H1 (cell line): ENCODE measurements at regions of chr9 and their contacts with region 1.

Region 1: GRCh38 chr9:87950765-87951488 is 23.4 kb downstream of the CDK20 start:
- DNase-seq: peak in 1 of 2 experiments; percentile 57
- H3K4me3 ChIP-seq: no peak overlapping the region
- H3K27ac ChIP-seq: no peak overlapping the region
- H3K4me1 ChIP-seq: no peaks in the 10 kb centered on the region
- H3K27me3 ChIP-seq: no peaks in the 10 kb centered on the region; a peak in 1 of 7 replicates
- CTCF ChIP-seq: peak in 2 of 3 experiments; percentile 73 to 75; a peak in 3 of 4 replicates
- EP300 ChIP-seq: no peak
- POLR2A ChIP-seq: no peak
- RAD21 ChIP-seq: peak; percentile 95 to 97

Region 2: GRCh38 chr9:87701931-87702421 is 249.0 kb before region 1 on chr9:
- CTCF ChIA-PET with region 1: no interaction called
- POLR2A ChIA-PET with region 1: no interaction called
- DNase-seq: no peak
- H3K4me3 ChIP-seq: no peak overlapping the region
- H3K27ac ChIP-seq: no peak overlapping the region
- H3K4me1 ChIP-seq: 0 out of 7 replicates have a peak, but pooled peaks cover 0 to 4% (median 0%) of the 10 kb centered on the region in 4 experiments
- H3K27me3 ChIP-seq: no peaks in the 10 kb centered on the region
- CTCF ChIP-seq: no peak
- EP300 ChIP-seq: no peak
- POLR2A ChIP-seq: no peak
- RAD21 ChIP-seq: no peak

Region 3: GRCh38 chr9:87883990-87884389 is 66.9 kb before region 1 on chr9:
- CTCF ChIA-PET with region 1: interaction called, 10 read pairs
- POLR2A ChIA-PET with region 1: no interaction called
- DNase-seq: peak in 1 of 2 experiments; percentile 81
- H3K4me3 ChIP-seq: no peak overlapping the region
- H3K27ac ChIP-seq: no peak overlapping the region
- H3K4me1 ChIP-seq: peaks cover 0 to 12% (median 1%) of the 10 kb centered on the region in 4 experiments; a peak in 5 of 7 replicates
- H3K27me3 ChIP-seq: no peaks in the 10 kb centered on the region; a peak in 1 of 7 replicates
- CTCF ChIP-seq: peak; percentile 58 to 76 (median 63)
- EP300 ChIP-seq: no peak
- POLR2A ChIP-seq: no peak
- RAD21 ChIP-seq: peak; percentile 31 to 62; a peak in 3 of 4 replicates

Region 4: GRCh38 chr9:88011005-88011766 is 60.3 kb after region 1 on chr9:
- CTCF ChIA-PET with region 1: interaction called, 19 read pairs
- POLR2A ChIA-PET with region 1: no interaction called
- DNase-seq: no peak
- H3K4me3 ChIP-seq: no peak overlapping the region
- H3K27ac ChIP-seq: no peak overlapping the region
- H3K4me1 ChIP-seq: peaks cover 0 to 2% (median 0%) of the 10 kb centered on the region in 4 experiments; a peak in 1 of 7 replicates
- H3K27me3 ChIP-seq: no peaks in the 10 kb centered on the region
- CTCF ChIP-seq: peak in 2 of 3 experiments; percentile 31 to 34; a peak in 2 of 4 replicates
- EP300 ChIP-seq: no peak
- POLR2A ChIP-seq: no peak
- RAD21 ChIP-seq: peak in 1 of 2 experiments; percentile 38; a peak in 2 of 4 replicates

Region 5: DNA sequence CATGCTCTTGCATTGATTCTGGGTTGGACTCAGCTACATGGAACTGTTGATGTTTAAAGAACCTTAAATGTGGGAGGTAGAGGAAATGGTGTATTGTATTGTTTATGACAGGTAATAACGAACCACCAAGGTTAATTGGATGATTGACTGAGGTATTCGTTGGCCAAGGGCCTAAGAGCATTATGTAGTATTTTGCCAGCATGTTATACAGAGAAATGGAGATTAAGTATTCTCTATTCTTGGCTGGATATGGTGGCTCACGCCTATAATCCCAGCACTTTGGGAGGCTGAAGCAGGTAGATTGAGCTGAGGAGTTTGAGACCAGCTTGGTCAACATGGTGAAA is 82.4 kb after region 1 on chr9:
- CTCF ChIA-PET with region 1: interaction called, 78 read pairs
- POLR2A ChIA-PET with region 1: no interaction called
- DNase-seq: no peak
- H3K4me3 ChIP-seq: no peak overlapping the region
- H3K27ac ChIP-seq: no peak overlapping the region
- H3K4me1 ChIP-seq: peaks cover 0 to 3% (median 0%) of the 10 kb centered on the region in 4 experiments; a peak in 1 of 7 replicates
- H3K27me3 ChIP-seq: no peaks in the 10 kb centered on the region
- CTCF ChIP-seq: no peak
- EP300 ChIP-seq: no peak
- POLR2A ChIP-seq: no peak
- RAD21 ChIP-seq: no peak

Region 6: GRCh38 chr9:88041447-88041846 is 90.5 kb after region 1 on chr9:
- CTCF ChIA-PET with region 1: interaction called, 78 read pairs
- POLR2A ChIA-PET with region 1: no interaction called
- DNase-seq: no peak
- H3K4me3 ChIP-seq: no peak overlapping the region
- H3K27ac ChIP-seq: no peak overlapping the region
- H3K4me1 ChIP-seq: peaks cover 0 to 15% (median 8%) of the 10 kb centered on the region in 4 experiments; a peak in 4 of 7 replicates
- H3K27me3 ChIP-seq: no peaks in the 10 kb centered on the region
- CTCF ChIP-seq: peak in 2 of 3 experiments; percentile 60 to 79; a peak in 3 of 4 replicates
- EP300 ChIP-seq: no peak
- POLR2A ChIP-seq: no peak
- RAD21 ChIP-seq: peak; percentile 86 to 93

Region 7: GRCh38 chr9:88053856-88054501 is 103.1 kb after region 1 on chr9:
- CTCF ChIA-PET with region 1: interaction called, 15 read pairs
- POLR2A ChIA-PET with region 1: no interaction called
- DNase-seq: no peak
- H3K4me3 ChIP-seq: no peak overlapping the region
- H3K27ac ChIP-seq: no peak overlapping the region
- H3K4me1 ChIP-seq: peaks cover 0 to 7% (median 0%) of the 10 kb centered on the region in 4 experiments; a peak in 2 of 7 replicates
- H3K27me3 ChIP-seq: no peaks in the 10 kb centered on the region
- CTCF ChIP-seq: no peak
- EP300 ChIP-seq: no peak
- POLR2A ChIP-seq: no peak
- RAD21 ChIP-seq: no peak

Region 8: DNA sequence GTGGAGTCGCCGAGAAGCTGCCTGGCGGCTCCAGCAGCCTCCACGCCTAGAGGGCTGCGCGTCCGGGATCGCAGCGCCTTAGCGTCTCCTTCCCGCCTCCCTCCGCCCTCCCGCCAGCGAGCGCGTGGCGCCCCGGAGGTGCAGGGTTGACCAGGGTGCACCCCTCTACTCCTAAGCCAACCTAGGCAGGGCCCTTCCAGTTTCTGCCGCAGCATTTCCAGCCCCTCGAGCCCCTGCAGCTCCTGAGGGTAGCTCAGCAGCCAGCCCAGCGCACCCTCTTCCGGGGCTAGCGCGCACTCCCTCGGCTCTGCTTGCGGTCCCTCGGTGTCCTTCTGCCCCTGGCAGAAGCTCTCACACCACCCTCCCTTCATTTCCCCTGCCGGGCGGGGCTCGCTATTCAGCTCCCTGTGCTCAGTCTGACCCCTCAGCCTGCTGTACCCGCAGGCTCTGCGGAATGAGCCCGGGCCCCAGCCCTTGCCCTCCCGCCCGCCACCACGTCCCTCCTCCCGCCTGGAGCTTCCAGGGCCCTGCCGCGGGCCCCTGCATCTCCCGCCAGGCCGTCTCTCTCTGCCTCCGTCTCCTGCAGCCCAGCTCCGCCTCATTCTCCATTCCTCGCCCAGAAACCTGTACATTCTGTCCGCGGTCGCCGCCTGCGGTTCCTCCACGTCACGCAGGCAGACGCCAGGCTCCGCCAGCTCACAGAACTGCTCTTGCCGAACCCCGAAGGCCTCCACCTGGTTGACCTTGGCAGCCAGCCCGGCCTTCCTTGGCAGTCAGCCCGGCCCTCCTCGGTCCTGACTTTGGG is 125.6 kb after region 1 on chr9:
- CTCF ChIA-PET with region 1: interaction called, 12 read pairs
- POLR2A ChIA-PET with region 1: no interaction called
- DNase-seq: peak; percentile 49 to 83
- H3K4me3 ChIP-seq: peak overlapping the region; percentile 39 to 67 (median 56)
- H3K27ac ChIP-seq: no peak overlapping the region; the same call in 1 of the 2 replicates
- H3K4me1 ChIP-seq: peaks cover 0 to 14% (median 8%) of the 10 kb centered on the region in 4 experiments; a peak in 6 of 7 replicates
- H3K27me3 ChIP-seq: peaks cover 0 to 32% (median 16%) of the 10 kb centered on the region in 4 experiments; a peak in 6 of 7 replicates
- CTCF ChIP-seq: peak in 1 of 3 experiments; percentile 1; a peak in 2 of 4 replicates
- EP300 ChIP-seq: no peak
- POLR2A ChIP-seq: no peak; a peak in 1 of 3 replicates
- RAD21 ChIP-seq: peak in 1 of 2 experiments; percentile 11; a peak in 1 of 4 replicates

Region 9: GRCh38 chr9:88660611-88661010 is 709.7 kb after region 1 on chr9:
- CTCF ChIA-PET with region 1: no interaction called
- POLR2A ChIA-PET with region 1: no interaction called
- DNase-seq: peak; percentile 10 to 53
- H3K4me3 ChIP-seq: no peak overlapping the region
- H3K27ac ChIP-seq: no peak overlapping the region
- H3K4me1 ChIP-seq: no peaks in the 10 kb centered on the region
- H3K27me3 ChIP-seq: no peaks in the 10 kb centered on the region
- CTCF ChIP-seq: peak in 2 of 3 experiments; percentile 48 to 66; a peak in 3 of 4 replicates
- EP300 ChIP-seq: no peak
- POLR2A ChIP-seq: no peak
- RAD21 ChIP-seq: peak; percentile 70 to 72